ENCODE measurements at regions of chr20 and their contacts with region 1.

Region 1: GRCh38 chr20:3051385-3052019 is 5.7 kb downstream of the MRPS26 start:
- DNase-seq: no peak
- ATAC-seq: no peak
- H3K4me3 Mint-ChIP-seq: no peak overlapping the region
- H3K27ac Mint-ChIP-seq: peak overlapping the region; percentile 34
- H3K4me1 Mint-ChIP-seq: peaks cover 17% of the 10 kb centered on the region
- H3K27me3 Mint-ChIP-seq: no peaks in the 10 kb centered on the region
- CTCF ChIP-seq: no peak

Region 2: GRCh38 chr20:2840138-2840966 is 211.2 kb before region 1 on chr20 and contains the starts of genes PCED1A and VPS16:
- CTCF ChIA-PET with region 1: no interaction called
- POLR2A ChIA-PET with region 1: no interaction called
- intact Hi-C with region 1: no loop called
- DNase-seq: peak; percentile 91
- ATAC-seq: peak; percentile 98
- H3K4me3 Mint-ChIP-seq: peak within 1 kb of the TSS; percentile 83
- H3K27ac Mint-ChIP-seq: peak within 1 kb of the TSS; percentile 88
- H3K4me1 Mint-ChIP-seq: peaks cover 36% of the 10 kb centered on the region
- H3K27me3 Mint-ChIP-seq: no peaks in the 10 kb centered on the region
- CTCF ChIP-seq: no peak
- total RNA-seq, gene PCED1A: 33.9 to 34.3 TPM
- total RNA-seq, gene VPS16: 34.5 to 38.7 TPM

Region 3: GRCh38 chr20:3077618-3078134 is 26.2 kb after region 1 on chr20:
- CTCF ChIA-PET with region 1: interaction called, 27 read pairs
- POLR2A ChIA-PET with region 1: no interaction called
- intact Hi-C with region 1: no loop called
- DNase-seq: peak; percentile 39
- ATAC-seq: peak; percentile 38
- H3K4me3 Mint-ChIP-seq: peak overlapping the region; percentile 2
- H3K27ac Mint-ChIP-seq: no peak overlapping the region
- H3K4me1 Mint-ChIP-seq: peaks cover 9% of the 10 kb centered on the region
- H3K27me3 Mint-ChIP-seq: peaks cover 27% of the 10 kb centered on the region
- CTCF ChIP-seq: no peak

Region 4: DNA sequence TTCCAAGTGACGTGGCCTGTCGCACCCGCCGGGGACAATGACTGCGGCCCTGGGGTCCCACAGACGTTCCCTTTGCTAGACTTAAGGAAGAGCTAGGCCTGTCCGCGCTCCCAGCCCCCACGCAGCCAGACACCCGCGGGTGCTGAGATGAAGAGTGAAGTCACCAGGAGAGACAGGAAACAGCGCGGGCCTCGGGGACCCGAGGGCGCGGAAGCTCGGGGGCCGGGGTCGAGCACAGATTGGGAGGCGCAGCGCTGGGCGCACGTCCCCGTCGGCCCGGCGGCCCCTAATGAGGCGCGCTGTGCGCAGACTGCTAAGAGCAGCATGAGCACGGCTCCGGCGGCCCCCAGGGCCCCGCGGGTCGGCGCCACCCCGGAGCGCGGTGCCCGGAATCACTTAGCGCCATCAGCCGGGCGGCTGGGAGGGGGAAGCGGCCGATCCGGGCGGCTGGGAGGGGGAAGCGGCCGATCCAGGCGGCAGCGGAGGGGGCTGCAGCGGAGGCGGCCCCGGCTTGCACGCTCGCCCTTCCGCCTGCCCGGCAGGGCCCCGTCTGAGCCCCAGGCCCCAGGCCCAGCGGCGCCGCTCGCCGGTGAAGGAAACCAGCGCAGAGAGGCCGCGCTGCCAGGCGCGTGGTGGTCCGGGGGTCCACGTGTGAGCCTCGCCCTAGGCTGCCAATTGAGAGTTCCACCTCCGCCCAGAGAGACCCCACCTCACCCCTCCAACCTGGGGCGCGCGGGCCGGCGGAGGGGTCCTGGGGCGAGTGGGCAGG is 41.3 kb after region 1 on chr20:
- CTCF ChIA-PET with region 1: interaction called, 10 read pairs
- POLR2A ChIA-PET with region 1: interaction called, 4 read pairs
- intact Hi-C with region 1: no loop called
- DNase-seq: peak; percentile 63
- ATAC-seq: peak; percentile 65
- H3K4me3 Mint-ChIP-seq: peak overlapping the region; percentile 81
- H3K27ac Mint-ChIP-seq: peak overlapping the region; percentile 96
- H3K4me1 Mint-ChIP-seq: peaks cover 27% of the 10 kb centered on the region
- H3K27me3 Mint-ChIP-seq: peaks cover 1% of the 10 kb centered on the region
- CTCF ChIP-seq: no peak

Region 5: DNA sequence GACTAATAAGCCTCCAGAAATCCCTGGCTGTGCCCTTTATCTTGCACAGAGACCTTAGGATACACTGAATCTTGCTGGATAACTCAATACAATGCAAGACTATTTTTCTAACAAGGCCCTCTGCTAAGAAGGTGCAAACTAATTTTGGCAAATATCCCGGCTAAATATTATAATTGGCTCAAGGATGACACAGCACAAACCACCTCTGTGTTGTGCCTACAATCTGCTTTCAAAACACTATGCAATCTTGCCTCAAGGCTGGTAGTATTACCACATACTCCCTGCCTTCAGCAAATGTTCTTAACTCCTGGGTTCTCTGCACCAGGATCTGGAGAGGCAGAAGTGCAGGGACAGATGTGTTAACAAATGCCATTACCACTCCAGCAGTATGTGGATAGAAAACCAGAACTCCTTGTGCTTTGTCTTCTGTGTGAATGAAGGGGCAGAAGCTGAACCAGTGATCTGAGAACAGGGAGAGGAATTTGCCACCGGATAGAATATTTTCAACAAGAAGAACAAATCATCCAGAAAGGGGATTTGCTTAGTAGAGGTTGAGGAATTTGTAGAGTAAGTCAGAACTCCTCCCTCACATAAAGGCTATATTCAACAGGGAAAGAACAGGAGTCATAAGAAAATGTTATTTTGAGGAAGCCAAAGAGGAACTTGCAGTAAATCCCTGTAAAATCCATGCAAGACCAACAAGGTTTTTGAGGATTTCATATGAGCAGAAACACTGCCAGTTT is 261.6 kb after region 1 on chr20:
- CTCF ChIA-PET with region 1: interaction called, 10 read pairs
- POLR2A ChIA-PET with region 1: no interaction called
- intact Hi-C with region 1: no loop called
- DNase-seq: no peak
- ATAC-seq: no peak
- H3K4me3 Mint-ChIP-seq: no peak overlapping the region
- H3K27ac Mint-ChIP-seq: no peak overlapping the region
- H3K4me1 Mint-ChIP-seq: no peaks in the 10 kb centered on the region
- H3K27me3 Mint-ChIP-seq: no peaks in the 10 kb centered on the region
- CTCF ChIP-seq: no peak

Measured in activated CD8-positive, alpha-beta T cell treated with anti-CD3 and anti-CD28 coated beads for 36 hours (primary cell).